CD4-positive, alpha-beta T cell (primary cell): ENCODE measurements at regions of chr15 and their contacts with region 1.

Region 1: GRCh38 chr15:67303490-67304363 is 49.1 kb downstream of the IQCH start:
- DNase-seq: peak in 10 of 14 experiments; percentile 0 to 74 (median 12)
- ATAC-seq: peak; percentile 59
- H3K4me3 ChIP-seq: no peak overlapping the region
- H3K4me3 Mint-ChIP-seq: no peak overlapping the region
- H3K27ac ChIP-seq: no peak overlapping the region
- H3K27ac Mint-ChIP-seq: no peak overlapping the region
- H3K4me1 ChIP-seq: no peaks in the 10 kb centered on the region
- H3K4me1 Mint-ChIP-seq: no peaks in the 10 kb centered on the region
- H3K27me3 ChIP-seq: no peaks in the 10 kb centered on the region
- H3K27me3 Mint-ChIP-seq: no peaks in the 10 kb centered on the region
- CTCF ChIP-seq: peak; percentile 79

Region 2: GRCh38 chr15:67240235-67241131 is 63.2 kb before region 1 on chr15:
- CTCF ChIA-PET with region 1: interaction called, 9 read pairs
- POLR2A ChIA-PET with region 1: interaction called, 4 read pairs
- intact Hi-C with region 1: loop called (anchors 1 to 2 kb)
- DNase-seq: peak in 10 of 14 experiments; percentile 7 to 68 (median 26)
- ATAC-seq: peak; percentile 84
- H3K4me3 ChIP-seq: no peak overlapping the region
- H3K4me3 Mint-ChIP-seq: peak overlapping the region; percentile 16
- H3K27ac ChIP-seq: peak overlapping the region in 1 of 2 donors; percentile 63
- H3K27ac Mint-ChIP-seq: peak overlapping the region; percentile 66
- H3K4me1 ChIP-seq: peaks cover 28% of the 10 kb centered on the region
- H3K4me1 Mint-ChIP-seq: peaks cover 61% of the 10 kb centered on the region
- H3K27me3 ChIP-seq: no peaks in the 10 kb centered on the region
- H3K27me3 Mint-ChIP-seq: no peaks in the 10 kb centered on the region
- CTCF ChIP-seq: peak; percentile 52